CD4-positive, alpha-beta memory T cell (primary cell): ENCODE measurements at regions of chr2 and their contacts with region 1.

Region 1: DNA sequence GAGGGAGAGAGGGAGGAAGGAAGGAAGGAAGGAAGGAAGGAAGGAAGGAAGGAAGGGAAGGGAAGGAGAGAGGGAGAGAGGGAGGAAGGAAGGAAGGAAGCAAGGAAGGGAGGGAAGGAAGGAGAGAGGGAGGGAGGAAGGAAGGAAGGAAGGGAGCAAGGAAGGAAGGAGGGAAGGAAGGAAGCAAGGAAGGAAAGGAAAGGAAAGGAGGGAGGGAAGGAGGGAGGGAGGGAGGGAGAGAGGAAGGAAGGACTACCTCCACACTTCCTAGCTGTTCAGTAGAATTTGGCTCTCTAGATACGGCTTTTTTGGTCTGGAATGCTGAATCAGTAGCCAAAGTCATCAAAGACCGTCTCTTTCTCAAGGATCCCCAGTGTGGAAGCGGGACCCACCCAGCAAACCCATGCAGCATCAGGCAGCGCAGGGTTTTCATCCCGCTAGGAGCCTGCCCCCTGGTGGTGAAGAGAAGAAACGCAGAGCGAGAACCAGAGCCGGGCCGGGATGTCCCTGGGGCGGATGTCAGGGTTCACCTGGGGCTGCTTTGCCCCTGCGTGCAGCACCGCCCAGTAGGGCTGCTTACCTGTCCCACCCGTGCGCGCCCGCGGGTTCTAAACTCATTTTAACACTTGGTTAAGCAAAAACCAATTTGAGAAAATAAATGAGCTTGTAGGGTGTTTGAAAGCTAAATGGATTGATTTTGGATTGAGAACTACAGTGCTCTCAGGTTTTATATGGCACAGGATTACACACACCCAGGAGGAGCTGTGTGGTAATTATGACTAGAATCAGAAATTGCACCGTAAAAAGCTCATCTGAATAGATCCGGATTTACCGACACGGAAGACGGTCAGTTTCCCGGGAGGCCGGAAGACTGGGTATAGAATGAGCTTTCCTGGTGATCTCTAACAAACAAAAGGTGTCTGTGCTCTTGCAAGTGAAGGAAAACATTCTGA is 48.1 kb upstream of the ARL4C start:
- DNase-seq: peak; percentile 61 to 73 (median 69)
- H3K4me3 ChIP-seq: no peak overlapping the region
- H3K4me3 Mint-ChIP-seq: no peak overlapping the region
- H3K27ac ChIP-seq: no peak overlapping the region
- H3K27ac Mint-ChIP-seq: peak overlapping the region in 2 of 7 donors; percentile 13 to 53
- H3K4me1 ChIP-seq: peaks cover 7% of the 10 kb centered on the region
- H3K4me1 Mint-ChIP-seq: peaks cover 2 to 13% (median 4%) of the 10 kb centered on the region in 4 donors
- H3K27me3 ChIP-seq: no peaks in the 10 kb centered on the region
- H3K27me3 Mint-ChIP-seq: peaks cover 5 to 14% of the 10 kb centered on the region in 2 donors

Region 2: GRCh38 chr2:233976690-233977294 is 568.1 kb before region 1 on chr2:
- CTCF ChIA-PET with region 1: interaction called, 11 read pairs
- POLR2A ChIA-PET with region 1: no interaction called
- intact Hi-C with region 1: loop called (anchors 1 kb)
- DNase-seq: peak; percentile 40 to 69 (median 66)
- H3K4me3 ChIP-seq: no peak overlapping the region
- H3K4me3 Mint-ChIP-seq: peak overlapping the region in 6 of 8 donors; percentile 1 to 66 (median 27)
- H3K27ac ChIP-seq: no peak overlapping the region
- H3K27ac Mint-ChIP-seq: peak overlapping the region in 6 of 7 donors; percentile 9 to 83 (median 48)
- H3K4me1 ChIP-seq: peaks cover 24% of the 10 kb centered on the region
- H3K4me1 Mint-ChIP-seq: peaks cover 25 to 38% (median 27%) of the 10 kb centered on the region in 4 donors
- H3K27me3 ChIP-seq: no peaks in the 10 kb centered on the region
- H3K27me3 Mint-ChIP-seq: no peaks in the 10 kb centered on the region

Region 3: GRCh38 chr2:234463626-234464290 is 81.2 kb before region 1 on chr2:
- CTCF ChIA-PET with region 1: no interaction called
- POLR2A ChIA-PET with region 1: no interaction called
- intact Hi-C with region 1: no loop called
- DNase-seq: peak; percentile 83 to 90 (median 87)
- H3K4me3 ChIP-seq: peak overlapping the region; percentile 12 to 48
- H3K4me3 Mint-ChIP-seq: peak overlapping the region; percentile 69 to 86 (median 81)
- H3K27ac ChIP-seq: peak overlapping the region; percentile 86
- H3K27ac Mint-ChIP-seq: peak overlapping the region; percentile 88 to 99 (median 97)
- H3K4me1 ChIP-seq: peaks cover 81% of the 10 kb centered on the region
- H3K4me1 Mint-ChIP-seq: peaks cover 49 to 94% (median 73%) of the 10 kb centered on the region in 4 donors
- H3K27me3 ChIP-seq: no peaks in the 10 kb centered on the region
- H3K27me3 Mint-ChIP-seq: no peaks in the 10 kb centered on the region

Region 4: GRCh38 chr2:234533626-234534025 is 11.3 kb before region 1 on chr2:
- CTCF ChIA-PET with region 1: interaction called, 19 read pairs
- POLR2A ChIA-PET with region 1: no interaction called
- intact Hi-C with region 1: no loop called
- DNase-seq: no peak
- H3K4me3 ChIP-seq: no peak overlapping the region
- H3K4me3 Mint-ChIP-seq: no peak overlapping the region
- H3K27ac ChIP-seq: no peak overlapping the region
- H3K27ac Mint-ChIP-seq: no peak overlapping the region
- H3K4me1 ChIP-seq: no peaks in the 10 kb centered on the region
- H3K4me1 Mint-ChIP-seq: no peaks in the 10 kb centered on the region
- H3K27me3 ChIP-seq: no peaks in the 10 kb centered on the region
- H3K27me3 Mint-ChIP-seq: peaks cover 13 to 15% of the 10 kb centered on the region in 2 donors

Region 5: DNA sequence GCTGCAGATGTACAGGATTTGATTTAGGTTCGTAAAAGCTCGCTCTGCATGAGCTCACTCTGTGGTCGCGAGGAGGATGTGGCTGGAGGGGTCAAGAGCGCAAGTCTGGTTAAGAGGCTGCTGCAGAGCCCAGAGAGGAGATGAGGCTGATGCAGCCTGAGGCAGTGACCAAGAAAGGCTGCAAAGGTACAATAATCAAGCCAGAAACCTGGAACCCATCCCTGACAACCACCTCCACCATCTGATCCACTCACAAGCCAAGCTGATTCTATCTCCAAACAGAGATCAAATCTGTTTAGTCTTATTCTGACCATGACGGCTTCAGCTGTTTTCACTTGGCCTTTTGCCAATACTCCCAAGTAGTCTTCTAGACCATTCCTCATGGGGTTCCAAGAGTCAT is 10.8 kb after region 1 on chr2:
- CTCF ChIA-PET with region 1: interaction called, 27 read pairs
- POLR2A ChIA-PET with region 1: no interaction called
- intact Hi-C with region 1: no loop called
- DNase-seq: no peak
- H3K4me3 ChIP-seq: no peak overlapping the region
- H3K4me3 Mint-ChIP-seq: no peak overlapping the region
- H3K27ac ChIP-seq: no peak overlapping the region
- H3K27ac Mint-ChIP-seq: no peak overlapping the region
- H3K4me1 ChIP-seq: no peaks in the 10 kb centered on the region
- H3K4me1 Mint-ChIP-seq: peaks cover 0 to 8% (median 1%) of the 10 kb centered on the region in 4 donors
- H3K27me3 ChIP-seq: no peaks in the 10 kb centered on the region
- H3K27me3 Mint-ChIP-seq: peaks cover 10% of the 10 kb centered on the region in 2 donors

Region 6: DNA sequence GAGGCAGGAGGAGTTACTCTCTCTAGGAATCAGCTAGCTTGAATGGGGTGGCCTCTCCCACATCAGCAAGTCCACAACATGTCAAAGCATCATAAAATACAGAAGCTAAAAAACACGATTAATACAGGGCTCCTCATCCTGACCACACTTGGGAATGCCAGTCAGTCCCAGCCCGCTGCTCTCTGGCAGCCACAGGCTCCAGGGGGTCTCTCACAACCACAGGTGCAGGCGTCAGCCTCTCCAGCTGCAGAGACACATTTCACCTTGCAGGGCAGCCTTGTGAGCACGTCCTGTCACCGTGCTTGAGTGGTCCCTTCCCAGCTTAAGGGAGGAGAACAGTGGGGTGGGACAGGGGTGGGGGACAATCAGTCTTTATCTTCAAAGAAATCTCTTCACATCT is 269.4 kb after region 1 on chr2:
- CTCF ChIA-PET with region 1: no interaction called
- POLR2A ChIA-PET with region 1: no interaction called
- intact Hi-C with region 1: no loop called
- DNase-seq: no peak
- H3K4me3 ChIP-seq: no peak overlapping the region
- H3K4me3 Mint-ChIP-seq: no peak overlapping the region
- H3K27ac ChIP-seq: no peak overlapping the region
- H3K27ac Mint-ChIP-seq: no peak overlapping the region
- H3K4me1 ChIP-seq: no peaks in the 10 kb centered on the region
- H3K4me1 Mint-ChIP-seq: no peaks in the 10 kb centered on the region
- H3K27me3 ChIP-seq: no peaks in the 10 kb centered on the region
- H3K27me3 Mint-ChIP-seq: peaks cover 26 to 30% of the 10 kb centered on the region in 2 donors

Region 7: GRCh38 chr2:235216901-235217300 is 672.0 kb after region 1 on chr2:
- CTCF ChIA-PET with region 1: no interaction called
- POLR2A ChIA-PET with region 1: no interaction called
- intact Hi-C with region 1: no loop called
- DNase-seq: no peak
- H3K4me3 ChIP-seq: no peak overlapping the region
- H3K4me3 Mint-ChIP-seq: no peak overlapping the region
- H3K27ac ChIP-seq: no peak overlapping the region
- H3K27ac Mint-ChIP-seq: no peak overlapping the region
- H3K4me1 ChIP-seq: no peaks in the 10 kb centered on the region
- H3K4me1 Mint-ChIP-seq: no peaks in the 10 kb centered on the region
- H3K27me3 ChIP-seq: no peaks in the 10 kb centered on the region
- H3K27me3 Mint-ChIP-seq: peaks cover 12 to 24% of the 10 kb centered on the region in 2 donors